ENCODE measurements at regions of chr1 and their contacts with region 1.

Region 1: GRCh38 chr1:36149237-36149972 is at the start of gene TRAPPC3:
- DNase-seq: peak; percentile 100
- H3K4me3 ChIP-seq: peak within 1 kb of the TSS; percentile 97
- H3K27ac ChIP-seq: peak within 1 kb of the TSS; percentile 49
- H3K4me1 ChIP-seq: peaks cover 54% of the 10 kb centered on the region
- CTCF ChIP-seq: peak; percentile 98
- total RNA-seq, gene TRAPPC3: 50.3 and 71.0 TPM in 2 replicates

Region 2: GRCh38 chr1:36099681-36100341 is 49.6 kb before region 1 on chr1:
- CTCF ChIA-PET with region 1: interaction called, 4 read pairs
- POLR2A ChIA-PET with region 1: no interaction called
- intact Hi-C with region 1: loop called (anchors 5 kb)
- DNase-seq: peak; percentile 77
- H3K4me3 ChIP-seq: no peak overlapping the region
- H3K27ac ChIP-seq: no peak overlapping the region
- H3K4me1 ChIP-seq: no peaks in the 10 kb centered on the region
- CTCF ChIP-seq: peak; percentile 96

Region 3: DNA sequence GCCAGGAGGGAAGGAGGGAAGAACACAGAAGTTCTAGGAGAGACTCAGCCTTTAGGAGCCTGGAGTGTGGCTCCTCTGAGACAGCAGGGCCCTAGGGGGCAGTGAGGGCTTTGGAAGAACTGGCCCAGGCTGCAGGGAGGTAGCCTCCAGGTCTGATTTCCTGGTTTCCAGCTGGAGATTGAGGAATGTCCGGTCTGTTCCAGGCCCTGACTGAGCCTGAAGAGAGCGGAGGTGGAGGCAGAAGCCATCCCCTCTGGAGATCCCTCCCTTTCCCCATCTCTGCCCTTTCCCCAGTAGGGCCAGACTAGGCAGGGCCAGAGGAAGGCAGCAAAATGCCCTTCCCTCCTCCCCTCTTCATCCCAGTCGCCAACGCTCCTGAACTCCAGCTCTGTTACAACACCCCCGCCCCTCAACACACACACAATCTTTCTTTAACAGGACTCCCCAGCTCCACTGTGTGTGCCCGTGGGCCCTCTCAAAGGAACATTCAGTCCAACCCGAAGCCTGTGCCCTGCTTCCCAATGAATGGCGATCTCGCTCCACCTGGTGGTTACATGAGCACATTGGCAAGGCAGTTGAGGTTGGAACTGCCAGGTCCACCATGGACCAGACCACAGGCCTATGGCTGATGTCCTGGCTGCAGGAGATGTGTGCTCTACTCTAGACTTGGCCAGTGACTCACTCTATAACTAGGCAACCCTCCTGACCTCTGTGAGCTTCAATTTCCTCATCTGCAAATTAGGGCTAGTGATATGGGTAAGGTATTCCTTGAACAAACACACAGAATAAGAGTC is 38.6 kb after region 1 on chr1:
- CTCF ChIA-PET with region 1: interaction called, 16 read pairs
- POLR2A ChIA-PET with region 1: interaction called, 7 read pairs
- intact Hi-C with region 1: loop called (anchors 1 kb)
- DNase-seq: peak; percentile 89
- H3K4me3 ChIP-seq: no peak overlapping the region
- H3K27ac ChIP-seq: no peak overlapping the region
- H3K4me1 ChIP-seq: peaks cover 5% of the 10 kb centered on the region
- CTCF ChIP-seq: peak; percentile 96

Region 4: GRCh38 chr1:36285448-36286101 is 136.2 kb after region 1 on chr1:
- CTCF ChIA-PET with region 1: interaction called, 6 read pairs
- POLR2A ChIA-PET with region 1: interaction called, 3 read pairs
- intact Hi-C with region 1: loop called (anchors 1 kb)
- DNase-seq: peak; percentile 88
- H3K4me3 ChIP-seq: no peak overlapping the region
- H3K27ac ChIP-seq: no peak overlapping the region
- H3K4me1 ChIP-seq: peaks cover 4% of the 10 kb centered on the region
- CTCF ChIP-seq: peak; percentile 96

Region 5: DNA sequence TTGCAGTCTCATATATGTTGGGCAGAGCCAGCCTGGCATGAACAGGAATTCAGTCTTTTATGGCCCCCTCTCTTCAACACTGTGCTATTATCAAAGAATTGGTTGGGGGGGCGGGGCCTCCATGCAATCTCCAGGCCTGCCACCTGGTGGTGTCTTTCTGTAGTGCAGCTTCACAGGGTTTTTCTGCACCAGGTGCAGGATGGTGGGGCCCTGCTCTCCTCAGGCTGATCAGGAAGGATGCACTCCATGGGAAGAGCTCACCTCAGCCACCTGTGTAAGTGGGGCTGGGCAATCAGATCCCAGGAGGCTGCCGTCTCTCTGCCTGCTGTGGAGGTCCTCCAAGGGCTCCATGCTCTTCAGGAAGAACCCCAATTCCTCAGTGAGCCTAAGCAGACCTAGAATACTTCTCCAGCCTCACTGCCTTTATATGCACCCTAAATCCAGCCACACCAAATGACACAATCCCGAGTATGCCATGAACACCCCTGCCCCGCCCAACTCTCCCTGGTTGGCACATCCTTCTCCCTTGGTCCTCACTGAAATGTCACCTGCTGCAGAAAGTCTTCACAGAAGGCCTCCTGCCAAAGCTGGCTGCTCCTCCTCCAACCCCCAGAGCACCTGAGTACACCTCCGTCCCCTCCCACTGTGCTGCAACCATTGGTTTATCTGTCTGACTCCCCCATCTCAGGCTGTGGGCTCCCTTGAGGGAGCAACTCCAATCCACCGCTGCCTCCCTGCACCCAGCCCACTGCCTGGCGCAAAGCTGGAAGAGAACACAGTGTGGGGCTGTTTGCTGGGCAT is 219.9 kb after region 1 on chr1:
- CTCF ChIA-PET with region 1: no interaction called
- POLR2A ChIA-PET with region 1: no interaction called
- intact Hi-C with region 1: loop called (anchors 1 kb)
- DNase-seq: peak; percentile 83
- H3K4me3 ChIP-seq: no peak overlapping the region
- H3K27ac ChIP-seq: peak overlapping the region; percentile 48
- H3K4me1 ChIP-seq: peaks cover 76% of the 10 kb centered on the region
- CTCF ChIP-seq: peak; percentile 96

Region 6: GRCh38 chr1:36622741-36623648 is 473.6 kb after region 1 on chr1:
- CTCF ChIA-PET with region 1: no interaction called
- POLR2A ChIA-PET with region 1: no interaction called
- intact Hi-C with region 1: no loop called
- DNase-seq: no peak
- H3K4me3 ChIP-seq: no peak overlapping the region
- H3K27ac ChIP-seq: no peak overlapping the region
- H3K4me1 ChIP-seq: no peaks in the 10 kb centered on the region
- CTCF ChIP-seq: no peak